Psoas muscle (tissue), 8 donors: ENCODE measurements at regions of chr22 and their contacts with region 1.

Region 1: GRCh38 chr22:36194971-36195370 is 6.6 kb downstream of the APOL4 start:
- DNase-seq: peak; percentile 39 to 68
- ATAC-seq: peak; percentile 45 to 68 (median 58)
- H3K4me3 ChIP-seq: no peak overlapping the region
- H3K27ac ChIP-seq: no peak overlapping the region
- H3K4me1 ChIP-seq: peaks cover 22% of the 10 kb centered on the region
- H3K27me3 ChIP-seq: no peaks in the 10 kb centered on the region
- CTCF ChIP-seq: peak; percentile 80

Region 2: DNA sequence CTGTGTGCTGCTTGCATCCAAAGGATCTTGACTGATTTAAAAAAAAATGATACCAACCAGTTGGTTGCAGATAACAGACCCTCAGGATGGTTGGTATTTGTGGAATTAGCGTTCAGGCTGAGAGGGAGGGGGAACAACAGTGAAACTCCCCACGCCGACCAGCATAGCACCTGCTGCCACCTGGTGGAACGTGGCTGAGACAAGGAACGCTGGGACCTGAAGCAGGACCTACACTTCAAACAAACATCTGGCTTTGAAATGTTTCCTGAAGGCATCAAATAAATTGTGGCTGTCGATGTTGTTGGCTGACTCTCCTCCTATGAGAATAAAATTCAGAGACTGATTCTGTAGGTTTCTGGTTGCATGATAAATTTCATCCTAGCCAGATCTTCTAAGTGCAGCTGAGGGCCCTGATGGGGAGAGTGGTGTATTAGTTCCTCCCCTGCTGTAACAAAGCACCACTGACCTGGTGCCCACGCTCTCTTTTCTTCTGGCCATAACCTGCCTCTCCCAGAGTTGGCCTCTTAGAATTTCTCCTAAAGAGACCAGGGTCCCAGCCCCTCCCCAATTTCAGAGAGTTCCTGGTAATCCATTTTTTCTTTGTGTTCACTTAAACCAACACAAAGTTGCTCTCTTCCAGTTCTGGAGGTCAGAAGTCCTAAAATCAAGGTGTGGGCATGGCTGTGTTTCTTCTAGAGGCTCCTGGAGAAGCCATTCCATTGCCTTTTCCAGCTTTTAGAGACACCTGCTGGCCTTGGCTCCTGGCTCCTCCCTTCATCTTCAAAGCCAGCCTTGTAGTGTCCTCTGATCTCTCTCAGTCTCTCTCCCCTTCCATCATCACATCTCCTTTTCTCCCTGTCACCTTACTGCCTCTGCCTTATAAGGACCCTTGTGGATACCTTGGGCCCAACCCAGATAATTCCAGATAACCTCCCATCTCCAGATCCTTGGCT is 27.1 kb after region 1 on chr22:
- intact Hi-C with region 1: loop called in 1 of 2 experiments (anchors 1 kb)
- DNase-seq: peak; percentile 39 to 72
- ATAC-seq: peak in 3 of 4 donors; percentile 46 to 67 (median 47)
- H3K4me3 ChIP-seq: no peak overlapping the region
- H3K27ac ChIP-seq: no peak overlapping the region
- H3K4me1 ChIP-seq: peaks cover 28% of the 10 kb centered on the region
- H3K27me3 ChIP-seq: no peaks in the 10 kb centered on the region
- CTCF ChIP-seq: peak; percentile 65

Region 3: GRCh38 chr22:36239401-36240171 is 44.6 kb after region 1 on chr22 and contains the start of gene APOL2:
- intact Hi-C with region 1: loop called (anchors 2 to 5 kb)
- DNase-seq: peak; percentile 86 to 92
- ATAC-seq: peak; percentile 96 to 98 (median 98)
- H3K4me3 ChIP-seq: peak within 1 kb of the TSS; percentile 75
- H3K27ac ChIP-seq: peak within 1 kb of the TSS; percentile 86
- H3K4me1 ChIP-seq: peaks cover 44% of the 10 kb centered on the region
- H3K27me3 ChIP-seq: no peaks in the 10 kb centered on the region
- CTCF ChIP-seq: peak; percentile 74
- total RNA-seq, gene APOL2: 24.4 to 54.7 (median 43.6) TPM

Region 4: GRCh38 chr22:36277482-36278291 is 82.7 kb after region 1 on chr22:
- intact Hi-C with region 1: loop called (anchors 2 to 5 kb)
- DNase-seq: peak; percentile 58 to 74
- ATAC-seq: peak; percentile 66 to 83 (median 75)
- H3K4me3 ChIP-seq: no peak overlapping the region
- H3K27ac ChIP-seq: no peak overlapping the region
- H3K4me1 ChIP-seq: no peaks in the 10 kb centered on the region
- H3K27me3 ChIP-seq: no peaks in the 10 kb centered on the region
- CTCF ChIP-seq: peak; percentile 72

Region 5: DNA sequence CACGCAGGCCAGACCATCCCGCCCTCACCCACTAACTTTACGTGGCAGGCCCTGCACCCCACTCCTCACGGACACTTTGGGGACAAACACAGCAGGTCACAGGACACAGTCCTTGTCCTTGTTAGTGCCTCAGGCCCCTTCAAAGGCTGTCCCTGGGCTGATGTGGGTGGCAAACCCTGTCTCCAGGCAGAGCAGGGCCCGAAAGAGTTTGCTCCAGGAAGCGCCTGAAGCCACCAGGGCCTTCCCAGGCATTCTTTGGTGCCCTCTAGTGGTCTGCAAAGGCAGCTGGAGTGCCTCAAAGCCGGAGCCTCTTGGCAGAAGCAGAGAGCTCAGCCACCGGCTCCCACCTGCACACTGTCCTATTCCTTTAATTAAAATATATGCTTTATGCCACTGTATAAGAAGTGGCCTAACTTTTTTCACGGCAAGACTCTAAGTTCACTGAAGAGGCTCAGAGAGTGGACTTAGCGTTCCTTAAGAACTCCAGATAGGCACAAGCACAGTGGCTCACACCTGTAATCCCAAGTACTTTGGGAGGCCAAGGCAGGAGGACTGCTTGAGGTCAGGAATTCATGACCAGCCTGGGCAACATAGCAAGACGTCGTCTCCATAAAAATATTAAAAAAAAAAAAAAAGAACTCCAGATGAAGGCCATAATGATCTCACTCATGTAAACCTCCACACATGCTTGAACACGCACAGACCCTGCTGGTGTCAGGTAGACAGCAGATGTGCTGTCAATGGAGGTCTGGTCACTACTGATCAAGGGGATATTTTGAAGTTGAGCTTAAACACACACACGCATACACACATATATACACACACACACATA is 275.4 kb after region 1 on chr22:
- intact Hi-C with region 1: no loop called
- DNase-seq: peak; percentile 76 to 89
- ATAC-seq: peak; percentile 49 to 79 (median 60)
- H3K4me3 ChIP-seq: no peak overlapping the region
- H3K27ac ChIP-seq: peak overlapping the region; percentile 97
- H3K4me1 ChIP-seq: peaks cover 50% of the 10 kb centered on the region
- H3K27me3 ChIP-seq: no peaks in the 10 kb centered on the region
- CTCF ChIP-seq: peak; percentile 97

Region 6: GRCh38 chr22:36481393-36482168 is 286.6 kb after region 1 on chr22 and contains the start of gene TXN2:
- intact Hi-C with region 1: loop called in 1 of 2 experiments (anchors 10 kb)
- DNase-seq: peak; percentile 98 to 99
- ATAC-seq: peak; percentile 93 to 95 (median 94)
- H3K4me3 ChIP-seq: peak within 1 kb of the TSS; percentile 92
- H3K27ac ChIP-seq: peak within 1 kb of the TSS; percentile 97
- H3K4me1 ChIP-seq: peaks cover 15% of the 10 kb centered on the region
- H3K27me3 ChIP-seq: no peaks in the 10 kb centered on the region
- CTCF ChIP-seq: no peak
- total RNA-seq, gene TXN2: 83.9 to 146 (median 112) TPM